CD8-positive, alpha-beta T cell (primary cell): ENCODE measurements at regions of chr5 and their contacts with region 1.

Region 1: DNA sequence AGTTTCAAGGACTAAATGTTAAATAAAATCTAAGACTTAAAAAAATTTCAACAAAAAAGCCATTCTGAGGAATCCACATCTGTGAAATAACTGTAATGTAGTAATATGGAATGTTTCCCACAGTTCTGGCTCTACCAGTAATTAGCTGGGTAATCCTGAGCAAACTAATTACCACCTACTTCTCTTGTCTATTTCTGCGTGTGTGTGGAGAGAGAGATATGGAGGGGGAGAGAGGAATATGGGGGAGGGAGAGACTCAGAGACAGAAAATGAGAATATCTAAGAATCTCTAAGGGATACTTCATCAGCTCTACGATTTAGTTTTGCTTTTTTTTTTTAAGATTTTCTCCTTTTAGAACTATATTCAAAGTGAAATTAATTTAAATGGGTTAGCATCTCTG is 28.0 kb downstream of the TBCA start:
- DNase-seq: no peak
- ATAC-seq: no peak
- H3K4me3 ChIP-seq: no peak overlapping the region
- H3K4me3 Mint-ChIP-seq: no peak overlapping the region
- H3K27ac ChIP-seq: no peak overlapping the region
- H3K27ac Mint-ChIP-seq: no peak overlapping the region
- H3K4me1 ChIP-seq: no peaks in the 10 kb centered on the region
- H3K4me1 Mint-ChIP-seq: peaks cover 50% of the 10 kb centered on the region
- H3K27me3 ChIP-seq: no peaks in the 10 kb centered on the region
- H3K27me3 Mint-ChIP-seq: no peaks in the 10 kb centered on the region
- CTCF ChIP-seq: no peak

Region 2: GRCh38 chr5:77768978-77769377 is 20.8 kb after region 1 on chr5:
- CTCF ChIA-PET with region 1: no interaction called
- POLR2A ChIA-PET with region 1: no interaction called
- intact Hi-C with region 1: loop called in 1 of 2 experiments (anchors 1 kb)
- DNase-seq: no peak
- ATAC-seq: no peak
- H3K4me3 ChIP-seq: no peak overlapping the region
- H3K4me3 Mint-ChIP-seq: no peak overlapping the region
- H3K27ac ChIP-seq: no peak overlapping the region
- H3K27ac Mint-ChIP-seq: no peak overlapping the region
- H3K4me1 ChIP-seq: peaks cover 49% of the 10 kb centered on the region
- H3K4me1 Mint-ChIP-seq: peaks cover 67% of the 10 kb centered on the region
- H3K27me3 ChIP-seq: no peaks in the 10 kb centered on the region
- H3K27me3 Mint-ChIP-seq: no peaks in the 10 kb centered on the region
- CTCF ChIP-seq: no peak

Region 3: DNA sequence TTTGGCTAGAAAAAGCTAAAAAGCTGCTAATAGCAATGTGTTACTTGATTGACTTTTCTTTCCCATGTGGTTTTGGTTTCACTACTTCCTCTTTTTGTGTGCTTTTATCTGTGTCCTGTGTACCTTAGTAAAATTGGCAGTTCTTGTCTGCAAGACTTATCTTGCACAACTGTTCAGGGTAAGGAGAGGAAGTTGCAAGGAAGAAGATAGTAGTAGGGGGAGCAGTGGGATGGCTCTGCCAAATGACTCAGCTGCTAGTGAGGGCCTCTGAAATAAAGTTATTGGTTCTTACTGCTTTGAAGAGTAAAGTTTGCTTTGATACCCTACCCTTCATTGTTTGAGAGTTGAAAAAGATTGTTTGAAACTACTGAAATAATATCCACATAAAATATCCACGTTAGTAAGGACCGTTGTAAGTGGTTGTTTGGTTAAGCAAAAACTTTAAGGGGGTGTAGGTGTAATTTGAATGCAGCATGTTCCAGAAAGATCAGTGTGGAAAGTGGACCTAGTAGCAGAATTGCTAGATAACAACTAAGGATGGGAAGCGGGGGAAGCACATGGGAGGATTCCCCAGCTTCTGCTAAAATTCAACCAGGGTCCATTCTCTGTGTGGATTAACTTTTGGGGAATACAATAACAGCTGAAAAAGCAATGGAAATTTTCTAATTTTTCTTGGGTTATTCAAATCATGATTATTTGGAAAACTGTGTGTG is 735.8 kb after region 1 on chr5:
- CTCF ChIA-PET with region 1: no interaction called
- POLR2A ChIA-PET with region 1: no interaction called
- intact Hi-C with region 1: no loop called
- DNase-seq: peak in 1 of 9 experiments; percentile 21
- ATAC-seq: no peak
- H3K4me3 ChIP-seq: no peak overlapping the region
- H3K4me3 Mint-ChIP-seq: no peak overlapping the region
- H3K27ac ChIP-seq: no peak overlapping the region
- H3K27ac Mint-ChIP-seq: no peak overlapping the region
- H3K4me1 ChIP-seq: peaks cover 5% of the 10 kb centered on the region
- H3K4me1 Mint-ChIP-seq: peaks cover 13% of the 10 kb centered on the region
- H3K27me3 ChIP-seq: no peaks in the 10 kb centered on the region
- H3K27me3 Mint-ChIP-seq: no peaks in the 10 kb centered on the region
- CTCF ChIP-seq: no peak